GM10248 (cell line): ENCODE measurements at regions of chr5 and their contacts with region 1.

Region 1: DNA sequence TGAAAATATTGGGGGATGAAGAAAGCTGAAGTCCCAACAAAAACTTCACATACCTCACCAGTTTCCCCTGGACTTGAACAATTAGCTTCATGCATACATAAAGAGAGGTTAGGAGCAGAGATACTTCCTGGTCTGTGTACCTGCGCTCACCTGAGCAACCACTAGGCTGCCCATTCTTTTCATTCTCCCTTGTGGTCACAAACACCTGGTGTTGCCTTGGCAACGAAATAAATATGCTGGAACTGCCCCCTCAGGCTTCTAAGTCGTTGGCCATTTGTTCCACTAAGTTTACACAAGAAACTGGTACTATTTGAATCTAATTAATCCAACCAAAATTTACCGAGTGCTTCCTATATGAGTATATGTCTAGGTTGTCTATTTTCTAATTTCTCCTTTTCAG is 18.1 kb downstream of the OTP start:
- DNase-seq: no peak
- CTCF ChIP-seq: no peak

Region 2: GRCh38 chr5:77630258-77631089 is 10.0 kb after region 1 on chr5:
- CTCF ChIA-PET with region 1: interaction called, 14 read pairs
- POLR2A ChIA-PET with region 1: no interaction called
- DNase-seq: peak; percentile 86
- CTCF ChIP-seq: peak; percentile 56

Region 3: GRCh38 chr5:77650686-77651085 is 30.3 kb after region 1 on chr5:
- CTCF ChIA-PET with region 1: no interaction called
- POLR2A ChIA-PET with region 1: no interaction called
- DNase-seq: no peak
- CTCF ChIP-seq: no peak